ENCODE measurements at regions of chr3 and their contacts with region 1.

Region 1: DNA sequence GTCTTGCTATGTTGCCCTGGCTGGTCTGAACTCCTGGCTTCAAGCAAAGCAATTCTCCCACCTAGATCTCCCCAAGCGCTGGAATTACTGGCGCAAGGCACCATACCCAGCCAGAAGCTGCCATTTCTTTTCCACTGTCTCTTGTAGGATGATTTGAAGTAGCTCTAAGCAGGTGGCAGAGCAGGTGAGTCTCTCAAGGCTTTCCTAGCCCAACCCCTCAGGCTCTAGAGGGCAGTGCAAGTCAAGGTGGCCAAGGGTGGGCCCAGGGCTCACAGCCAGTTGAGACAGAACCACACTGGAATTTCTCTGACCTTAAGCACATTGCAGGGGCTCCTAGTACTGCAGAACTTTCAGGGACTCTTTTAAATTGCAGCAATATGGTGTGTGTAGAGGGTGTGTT is 15.6 kb upstream of the DAG1 start:
- DNase-seq: no peak
- H3K4me3 ChIP-seq: no peak overlapping the region
- H3K27ac ChIP-seq: no peak overlapping the region
- H3K4me1 ChIP-seq: no peaks in the 10 kb centered on the region
- H3K27me3 ChIP-seq: no peaks in the 10 kb centered on the region
- CTCF ChIP-seq: peak in 1 of 4 experiments; percentile 11
- POLR2A ChIP-seq: no peak

Region 2: DNA sequence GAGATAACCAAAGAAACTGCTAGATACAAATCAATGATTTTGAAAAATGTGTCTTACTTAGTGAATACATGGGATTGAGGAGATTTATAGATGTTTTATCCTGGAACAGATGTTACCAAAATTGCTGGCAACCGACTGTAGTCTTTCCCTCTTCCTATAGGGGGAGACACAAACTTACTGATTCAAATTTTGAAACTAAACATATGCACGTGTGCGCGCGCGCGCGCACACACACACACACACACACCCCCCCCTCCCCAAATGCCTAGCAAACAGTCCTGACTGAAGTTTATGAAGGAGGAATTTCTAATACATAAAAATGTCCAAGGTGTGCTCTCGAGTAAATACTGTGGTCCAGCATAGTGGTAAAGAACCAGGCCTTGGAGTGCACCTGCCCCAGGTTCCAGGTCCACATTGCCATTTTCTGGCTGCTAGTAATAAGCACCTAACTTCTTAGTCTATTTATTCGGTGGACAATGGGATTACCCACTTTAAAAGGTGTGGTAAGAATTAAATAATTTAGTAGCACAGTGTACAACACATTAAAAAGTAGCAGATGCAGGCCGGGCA is 158.9 kb before region 1 on chr3:
- intact Hi-C with region 1: loop called (anchors 10 kb)
- DNase-seq: peak in 1 of 2 donors; percentile 29
- H3K4me3 ChIP-seq: no peak overlapping the region
- H3K27ac ChIP-seq: peak overlapping the region in 1 of 2 donors; percentile 77
- H3K4me1 ChIP-seq: peaks cover 0 to 7% of the 10 kb centered on the region in 2 donors
- H3K27me3 ChIP-seq: no peaks in the 10 kb centered on the region
- CTCF ChIP-seq: peak; percentile 43 to 53 (median 45)
- POLR2A ChIP-seq: no peak

Region 3: GRCh38 chr3:49339945-49340800 is 114.3 kb before region 1 on chr3 and contains the start of gene USP4:
- intact Hi-C with region 1: no loop called
- DNase-seq: peak; percentile 90 to 92
- H3K4me3 ChIP-seq: peak within 1 kb of the TSS; percentile 74 to 90
- H3K27ac ChIP-seq: peak within 1 kb of the TSS; percentile 90 to 95
- H3K4me1 ChIP-seq: peaks cover 0 to 6% of the 10 kb centered on the region in 2 donors
- H3K27me3 ChIP-seq: no peaks in the 10 kb centered on the region
- CTCF ChIP-seq: peak; percentile 50 to 79 (median 64)
- POLR2A ChIP-seq: peak; percentile 68 to 76
- total RNA-seq, gene USP4: 9.2 to 78.3 (median 28.8) TPM

Region 4: GRCh38 chr3:49602049-49602533 is 147.6 kb after region 1 on chr3:
- intact Hi-C with region 1: no loop called
- DNase-seq: no peak
- H3K4me3 ChIP-seq: no peak overlapping the region
- H3K27ac ChIP-seq: no peak overlapping the region
- H3K4me1 ChIP-seq: no peaks in the 10 kb centered on the region
- H3K27me3 ChIP-seq: no peaks in the 10 kb centered on the region
- CTCF ChIP-seq: no peak
- POLR2A ChIP-seq: no peak

Region 5: DNA sequence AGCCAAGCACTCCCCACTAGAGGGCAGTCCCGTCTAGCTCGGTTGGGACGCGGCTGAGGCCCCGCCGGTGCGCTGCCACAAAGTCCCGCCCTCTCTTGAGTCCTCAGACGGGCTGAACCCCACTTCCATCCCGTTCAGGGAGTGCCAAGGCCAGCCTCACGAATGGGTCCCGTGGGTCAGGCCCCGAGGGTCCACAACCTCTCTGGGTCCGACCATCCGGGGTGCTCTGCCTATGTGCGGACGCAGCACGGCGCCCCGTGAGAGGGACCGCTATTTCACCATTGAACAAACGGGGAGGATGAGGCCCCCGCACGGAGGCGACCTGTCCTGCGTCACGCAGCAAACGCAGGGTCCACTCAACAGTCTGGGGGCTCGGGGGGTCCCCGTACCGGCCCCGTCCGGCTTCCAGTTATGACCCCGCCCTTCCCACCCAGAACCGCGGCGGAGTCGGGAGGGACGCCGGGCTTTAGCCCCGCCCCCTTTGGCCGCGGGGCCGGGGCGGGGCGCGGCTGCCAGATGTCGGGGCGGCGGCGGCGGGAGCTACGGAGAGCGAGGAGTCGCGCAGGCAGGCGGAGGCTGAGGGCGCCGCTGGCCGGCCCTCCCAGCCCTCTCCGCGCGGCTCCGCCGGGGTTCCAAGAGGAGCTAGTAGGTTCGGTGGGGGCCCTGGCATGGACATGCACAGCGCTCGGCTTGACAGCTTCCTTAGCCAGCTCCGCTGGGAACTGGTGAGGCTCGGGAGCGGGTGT is 348.4 kb after region 1 on chr3 and contains the start of gene INKA1:
- intact Hi-C with region 1: no loop called
- DNase-seq: peak; percentile 90 to 91
- H3K4me3 ChIP-seq: peak within 1 kb of the TSS; percentile 72 to 84
- H3K27ac ChIP-seq: peak within 1 kb of the TSS; percentile 92 to 94
- H3K4me1 ChIP-seq: peaks cover 0 to 32% of the 10 kb centered on the region in 2 donors
- H3K27me3 ChIP-seq: no peaks in the 10 kb centered on the region
- CTCF ChIP-seq: peak; percentile 84 to 96 (median 91)
- POLR2A ChIP-seq: peak; percentile 69 to 77
- total RNA-seq, gene INKA1: 3.1 to 16.7 (median 6.6) TPM

Measured in uterus (tissue), 4 donors.